Panc1 (cell line): ENCODE measurements at regions of chr4 and their contacts with region 1.

Region 1: GRCh38 chr4:46185766-46186165 is 61.9 kb upstream of the GABRG1 start:
- DNase-seq: no peak
- ATAC-seq: no peak
- H3K4me3 ChIP-seq: no peak overlapping the region
- H3K27ac ChIP-seq: no peak overlapping the region
- H3K4me1 ChIP-seq: no peaks in the 10 kb centered on the region
- H3K27me3 ChIP-seq: no peaks in the 10 kb centered on the region
- CTCF ChIP-seq: no peak

Region 2: GRCh38 chr4:46196086-46196485 is 10.3 kb after region 1 on chr4:
- CTCF ChIA-PET with region 1: no interaction called
- POLR2A ChIA-PET with region 1: no interaction called
- in situ Hi-C with region 1: no loop called
- intact Hi-C with region 1: no loop called
- DNase-seq: no peak
- ATAC-seq: no peak
- H3K4me3 ChIP-seq: no peak overlapping the region
- H3K27ac ChIP-seq: no peak overlapping the region
- H3K4me1 ChIP-seq: no peaks in the 10 kb centered on the region
- H3K27me3 ChIP-seq: no peaks in the 10 kb centered on the region
- CTCF ChIP-seq: no peak

Region 3: DNA sequence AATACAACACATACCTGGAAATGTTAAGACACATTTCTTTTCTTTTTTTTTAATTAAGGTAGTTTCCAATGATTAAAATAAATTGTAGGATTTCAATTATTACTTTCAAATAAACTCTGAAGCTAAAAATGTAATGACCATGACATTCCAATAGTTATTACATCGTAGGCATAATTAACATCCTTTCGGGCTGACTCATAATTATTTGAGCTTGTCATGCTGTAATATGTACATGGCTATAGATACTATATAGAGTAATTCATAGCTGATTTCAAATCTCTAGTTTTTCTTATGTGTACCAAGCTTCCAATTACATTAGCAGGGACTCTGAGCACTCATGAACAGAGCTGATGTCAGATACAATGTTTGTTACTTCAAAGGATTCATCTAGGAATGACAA is 63.8 kb after region 1 on chr4:
- CTCF ChIA-PET with region 1: no interaction called
- POLR2A ChIA-PET with region 1: no interaction called
- in situ Hi-C with region 1: no loop called
- intact Hi-C with region 1: loop called (anchors 10 kb)
- DNase-seq: no peak
- ATAC-seq: no peak
- H3K4me3 ChIP-seq: no peak overlapping the region
- H3K27ac ChIP-seq: no peak overlapping the region
- H3K4me1 ChIP-seq: no peaks in the 10 kb centered on the region
- H3K27me3 ChIP-seq: no peaks in the 10 kb centered on the region
- CTCF ChIP-seq: no peak